ENCODE measurements at regions of chr17 and their contacts with region 1.

Region 1: GRCh38 chr17:14427900-14428647 is 127.2 kb downstream of the HS3ST3B1 start:
- DNase-seq: peak in 8 of 9 donors; percentile 33 to 76 (median 70)
- ATAC-seq: peak; percentile 99
- H3K4me3 ChIP-seq: peak overlapping the region; percentile 57
- H3K4me3 Mint-ChIP-seq: peak overlapping the region; percentile 76 to 96 (median 84)
- H3K27ac ChIP-seq: peak overlapping the region; percentile 73
- H3K27ac Mint-ChIP-seq: peak overlapping the region; percentile 68 to 97 (median 95)
- H3K4me1 ChIP-seq: peaks cover 30 to 39% of the 10 kb centered on the region in 2 donors
- H3K4me1 Mint-ChIP-seq: peaks cover 34 to 68% (median 61%) of the 10 kb centered on the region in 7 donors
- H3K27me3 ChIP-seq: no peaks in the 10 kb centered on the region
- H3K27me3 Mint-ChIP-seq: no peaks in the 10 kb centered on the region

Region 2: DNA sequence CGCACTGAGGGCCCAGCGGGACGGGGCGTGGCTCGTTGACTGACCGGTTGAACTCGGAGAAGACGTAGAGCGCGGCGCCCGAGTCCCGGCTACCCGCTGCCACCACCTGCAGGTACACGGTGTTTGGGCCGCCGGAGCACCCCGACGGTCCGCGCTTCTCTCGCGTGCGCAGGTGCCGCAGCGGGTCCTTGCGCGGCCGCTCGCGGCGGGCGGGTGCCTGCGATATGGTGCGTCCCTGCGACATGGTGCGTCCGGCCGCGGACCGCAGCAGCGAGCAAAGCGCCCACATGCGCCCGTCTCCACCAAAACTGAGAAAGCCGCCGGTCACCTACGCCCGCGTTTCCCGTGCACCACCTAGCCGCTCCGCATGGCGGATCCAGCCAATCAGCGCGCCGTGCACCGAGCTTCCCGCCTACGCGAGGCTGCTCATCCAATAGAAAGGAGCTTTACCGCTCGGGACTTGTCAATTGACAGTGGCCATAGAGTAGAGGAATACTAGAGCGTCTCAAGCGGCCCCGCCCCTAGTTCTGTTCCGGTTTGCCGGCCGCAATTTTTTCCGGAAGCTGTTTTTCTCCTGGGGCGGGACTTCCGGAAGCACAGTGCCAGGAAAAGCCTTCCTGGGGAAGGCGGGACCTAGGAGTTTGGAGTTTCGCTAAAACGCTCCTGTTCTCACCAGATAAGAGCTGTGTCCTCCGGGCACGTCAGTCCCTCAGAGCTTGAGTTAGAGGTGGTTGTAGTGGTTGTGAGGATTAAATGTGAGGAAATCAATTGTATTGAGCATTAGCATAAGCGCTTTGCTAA is 1410.2 kb before region 1 on chr17 and contains the start of gene ELAC2:
- CTCF ChIA-PET with region 1: no interaction called
- POLR2A ChIA-PET with region 1: no interaction called
- intact Hi-C with region 1: loop called (anchors 1 to 5 kb)
- DNase-seq: peak; percentile 86 to 98 (median 95)
- ATAC-seq: peak; percentile 100
- H3K4me3 ChIP-seq: peak within 1 kb of the TSS; percentile 77
- H3K4me3 Mint-ChIP-seq: peak within 1 kb of the TSS; percentile 90 to 99 (median 96)
- H3K27ac ChIP-seq: peak within 1 kb of the TSS; percentile 78
- H3K27ac Mint-ChIP-seq: peak within 1 kb of the TSS; percentile 85 to 99 (median 97)
- H3K4me1 ChIP-seq: peaks cover 6 to 16% of the 10 kb centered on the region in 2 donors
- H3K4me1 Mint-ChIP-seq: peaks cover 18 to 48% (median 35%) of the 10 kb centered on the region in 7 donors
- H3K27me3 ChIP-seq: no peaks in the 10 kb centered on the region
- H3K27me3 Mint-ChIP-seq: no peaks in the 10 kb centered on the region
- total RNA-seq, gene ELAC2: 65.2 to 78.9 (median 75.3) TPM

Region 3: GRCh38 chr17:13665872-13666635 is 762.0 kb before region 1 on chr17:
- CTCF ChIA-PET with region 1: no interaction called
- POLR2A ChIA-PET with region 1: no interaction called
- intact Hi-C with region 1: no loop called
- DNase-seq: no peak
- ATAC-seq: no peak
- H3K4me3 ChIP-seq: no peak overlapping the region
- H3K4me3 Mint-ChIP-seq: no peak overlapping the region
- H3K27ac ChIP-seq: no peak overlapping the region
- H3K27ac Mint-ChIP-seq: no peak overlapping the region
- H3K4me1 ChIP-seq: no peaks in the 10 kb centered on the region
- H3K4me1 Mint-ChIP-seq: no peaks in the 10 kb centered on the region
- H3K27me3 ChIP-seq: no peaks in the 10 kb centered on the region
- H3K27me3 Mint-ChIP-seq: peaks cover 0 to 26% (median 16%) of the 10 kb centered on the region in 5 donors

Region 4: DNA sequence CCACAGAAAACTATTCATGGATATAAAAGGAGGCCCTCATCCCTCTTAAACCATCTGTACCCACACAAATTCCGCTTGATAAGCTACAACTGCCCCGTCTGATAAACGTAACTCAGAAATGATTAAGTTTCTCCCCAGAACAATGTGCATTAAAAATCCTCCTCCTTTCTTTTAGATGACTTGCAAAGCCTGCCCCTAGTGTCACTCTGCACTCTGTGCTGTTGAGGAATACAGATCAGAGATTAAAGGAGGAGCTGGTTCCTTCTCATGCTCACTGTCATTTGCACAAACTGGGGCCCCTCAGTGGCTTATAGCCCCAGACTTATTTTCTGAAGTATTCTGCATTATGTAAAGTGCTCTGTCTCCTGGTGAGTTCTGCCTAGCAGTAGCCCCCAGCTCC is 224.7 kb before region 1 on chr17:
- CTCF ChIA-PET with region 1: interaction called, 3 read pairs
- POLR2A ChIA-PET with region 1: interaction called, 6 read pairs
- intact Hi-C with region 1: loop called (anchors 1 to 5 kb)
- DNase-seq: peak in 7 of 9 donors; percentile 51 to 72 (median 64)
- ATAC-seq: peak; percentile 59
- H3K4me3 ChIP-seq: no peak overlapping the region
- H3K4me3 Mint-ChIP-seq: peak overlapping the region; percentile 18 to 72 (median 58)
- H3K27ac ChIP-seq: peak overlapping the region; percentile 45
- H3K27ac Mint-ChIP-seq: peak overlapping the region; percentile 86 to 96 (median 94)
- H3K4me1 ChIP-seq: peaks cover 80 to 81% of the 10 kb centered on the region in 2 donors
- H3K4me1 Mint-ChIP-seq: peaks cover 76 to 95% (median 84%) of the 10 kb centered on the region in 7 donors
- H3K27me3 ChIP-seq: no peaks in the 10 kb centered on the region
- H3K27me3 Mint-ChIP-seq: no peaks in the 10 kb centered on the region

Region 5: DNA sequence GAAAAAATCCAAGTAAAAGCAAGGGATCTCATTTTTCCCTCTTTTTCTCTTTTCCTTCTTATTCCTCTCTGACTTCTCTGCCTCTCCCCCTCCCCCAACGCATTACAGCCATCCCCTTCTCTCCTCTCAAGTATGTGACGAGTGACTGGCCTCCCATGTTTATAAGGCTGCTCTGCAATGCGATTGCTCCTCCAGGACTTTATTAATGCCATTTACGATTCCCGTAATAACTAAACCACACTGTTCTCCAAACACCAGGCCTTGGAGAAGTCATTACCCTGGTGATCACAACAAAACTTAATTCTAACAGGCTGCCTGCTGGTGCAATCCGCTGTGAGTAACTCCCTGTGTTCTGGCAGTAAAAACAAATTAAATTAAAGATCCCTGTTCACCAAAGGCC is 38.4 kb before region 1 on chr17:
- CTCF ChIA-PET with region 1: no interaction called
- POLR2A ChIA-PET with region 1: no interaction called
- intact Hi-C with region 1: loop called in 1 of 2 experiments (anchors 5 kb)
- DNase-seq: no peak
- ATAC-seq: no peak
- H3K4me3 ChIP-seq: no peak overlapping the region
- H3K4me3 Mint-ChIP-seq: no peak overlapping the region
- H3K27ac ChIP-seq: no peak overlapping the region
- H3K27ac Mint-ChIP-seq: peak overlapping the region in 1 of 9 donors; percentile 8
- H3K4me1 ChIP-seq: no peaks in the 10 kb centered on the region
- H3K4me1 Mint-ChIP-seq: no peaks in the 10 kb centered on the region
- H3K27me3 ChIP-seq: no peaks in the 10 kb centered on the region
- H3K27me3 Mint-ChIP-seq: no peaks in the 10 kb centered on the region

Region 6: DNA sequence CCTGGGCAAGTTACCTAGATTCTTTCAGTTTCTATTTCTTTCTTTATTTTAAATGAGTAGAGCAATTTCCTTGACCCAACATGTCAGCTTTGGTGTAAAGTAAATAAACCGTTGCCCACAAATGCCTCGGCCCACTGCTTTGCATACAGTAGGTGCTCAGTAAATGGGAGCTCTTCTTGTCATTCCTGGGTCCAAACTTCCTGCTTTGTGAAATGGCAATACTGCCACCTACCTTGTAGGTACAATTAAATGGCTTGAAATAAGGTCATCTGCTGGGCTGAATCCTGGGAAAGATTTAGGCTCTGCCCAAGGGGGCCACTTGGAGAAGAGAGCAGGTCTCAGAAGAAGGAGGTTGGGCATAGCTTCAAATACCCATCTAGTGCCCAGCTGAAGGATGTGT is 125.8 kb after region 1 on chr17:
- CTCF ChIA-PET with region 1: interaction called, 3 read pairs
- POLR2A ChIA-PET with region 1: no interaction called
- intact Hi-C with region 1: loop called in 1 of 2 experiments (anchors 5 kb)
- DNase-seq: no peak
- ATAC-seq: no peak
- H3K4me3 ChIP-seq: no peak overlapping the region
- H3K4me3 Mint-ChIP-seq: no peak overlapping the region
- H3K27ac ChIP-seq: no peak overlapping the region
- H3K27ac Mint-ChIP-seq: peak overlapping the region in 1 of 9 donors; percentile 14
- H3K4me1 ChIP-seq: no peaks in the 10 kb centered on the region
- H3K4me1 Mint-ChIP-seq: peaks cover 0 to 13% (median 6%) of the 10 kb centered on the region in 7 donors
- H3K27me3 ChIP-seq: no peaks in the 10 kb centered on the region
- H3K27me3 Mint-ChIP-seq: peaks cover 0 to 1% (median 0%) of the 10 kb centered on the region in 5 donors